ENCODE measurements at regions of chr11 and their contacts with region 1.

Region 1: DNA sequence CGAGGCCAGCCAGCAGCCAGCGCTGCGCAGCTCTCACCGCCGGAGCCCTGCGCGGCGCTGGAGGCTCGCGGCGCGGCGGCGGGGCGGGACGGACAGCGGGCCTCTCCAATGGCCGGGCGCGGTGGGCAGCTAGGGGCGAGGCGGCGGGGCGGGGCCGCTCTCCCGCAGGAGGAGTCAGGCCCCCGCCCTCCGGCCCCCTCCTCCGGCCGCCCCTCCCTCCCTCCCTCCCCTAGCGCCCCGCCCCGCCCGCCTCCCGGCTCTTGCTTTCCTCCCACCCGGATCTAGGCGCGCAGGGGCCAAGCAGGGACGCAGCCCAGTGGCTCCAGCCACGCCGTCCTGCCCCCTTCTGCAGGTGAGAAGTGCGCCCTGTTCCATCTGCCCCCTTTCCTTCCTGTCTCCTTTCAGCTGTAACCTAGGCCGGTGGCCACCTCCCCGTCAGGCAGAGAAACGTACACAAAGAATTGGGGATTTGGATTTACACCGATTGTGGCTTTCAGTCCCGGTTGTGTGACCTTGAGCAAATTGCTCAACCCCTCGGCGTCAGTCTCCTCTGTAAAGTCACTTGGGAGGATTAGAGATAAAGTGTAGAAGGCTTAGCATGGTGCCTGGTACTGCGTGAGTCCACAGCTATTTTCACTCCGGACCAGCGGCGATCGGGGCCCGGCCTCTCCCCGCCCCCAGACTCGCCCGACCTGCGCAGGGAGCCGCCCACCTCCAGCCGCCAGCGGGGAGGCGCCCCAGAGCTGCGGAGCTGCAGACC is at the start of gene FZD4:
- DNase-seq: peak; percentile 91
- ATAC-seq: peak; percentile 94
- H3K4me3 Mint-ChIP-seq: peak within 1 kb of the TSS; percentile 98
- H3K27ac Mint-ChIP-seq: peak within 1 kb of the TSS; percentile 96
- H3K4me1 Mint-ChIP-seq: peaks cover 47% of the 10 kb centered on the region
- H3K27me3 Mint-ChIP-seq: peaks cover 29% of the 10 kb centered on the region
- CTCF ChIP-seq: no peak
- total RNA-seq, gene FZD4: 7.7 to 9.8 TPM (median 9.2 TPM) in 3 replicates

Region 2: GRCh38 chr11:86848861-86849260 is 106.7 kb before region 1 on chr11:
- CTCF ChIA-PET with region 1: no interaction called
- POLR2A ChIA-PET with region 1: no interaction called
- DNase-seq: no peak
- ATAC-seq: no peak
- H3K4me3 Mint-ChIP-seq: no peak overlapping the region
- H3K27ac Mint-ChIP-seq: no peak overlapping the region
- H3K4me1 Mint-ChIP-seq: peaks cover 8% of the 10 kb centered on the region
- H3K27me3 Mint-ChIP-seq: no peaks in the 10 kb centered on the region
- CTCF ChIP-seq: no peak

Region 3: GRCh38 chr11:86938900-86939880 is 16.4 kb before region 1 on chr11:
- CTCF ChIA-PET with region 1: interaction called, 34 read pairs
- POLR2A ChIA-PET with region 1: interaction called, 4 read pairs
- DNase-seq: no peak
- ATAC-seq: peak; percentile 49
- H3K4me3 Mint-ChIP-seq: no peak overlapping the region
- H3K27ac Mint-ChIP-seq: peak overlapping the region; percentile 86; the same call in 1 of the 2 replicates
- H3K4me1 Mint-ChIP-seq: peaks cover 40% of the 10 kb centered on the region
- H3K27me3 Mint-ChIP-seq: no peaks in the 10 kb centered on the region
- CTCF ChIP-seq: peak; percentile 55

Region 4: DNA sequence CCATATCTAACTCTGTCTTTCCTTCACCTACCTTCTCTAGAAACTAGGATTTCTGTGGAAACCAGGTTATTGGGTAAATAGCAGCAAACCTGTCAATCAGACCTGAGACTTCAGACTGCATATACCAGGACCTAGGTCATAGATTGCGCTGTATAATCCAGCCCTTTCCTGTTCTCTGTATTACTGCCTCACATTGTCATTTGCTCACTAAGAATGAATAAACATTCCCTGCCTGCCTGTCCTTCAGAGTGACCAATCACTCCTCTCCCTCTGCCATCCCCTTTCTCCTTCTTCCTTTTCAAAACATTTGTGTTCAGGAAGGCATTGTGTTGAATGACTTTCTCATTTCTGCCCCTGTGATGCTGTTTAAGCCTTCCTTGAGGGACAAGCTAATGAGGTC is 13.7 kb after region 1 on chr11:
- CTCF ChIA-PET with region 1: interaction called, 11 read pairs
- POLR2A ChIA-PET with region 1: interaction called, 4 read pairs
- DNase-seq: no peak
- ATAC-seq: no peak
- H3K4me3 Mint-ChIP-seq: no peak overlapping the region
- H3K27ac Mint-ChIP-seq: no peak overlapping the region; the same call in 1 of the 2 replicates
- H3K4me1 Mint-ChIP-seq: peaks cover 15% of the 10 kb centered on the region
- H3K27me3 Mint-ChIP-seq: peaks cover 6% of the 10 kb centered on the region
- CTCF ChIP-seq: no peak

Region 5: DNA sequence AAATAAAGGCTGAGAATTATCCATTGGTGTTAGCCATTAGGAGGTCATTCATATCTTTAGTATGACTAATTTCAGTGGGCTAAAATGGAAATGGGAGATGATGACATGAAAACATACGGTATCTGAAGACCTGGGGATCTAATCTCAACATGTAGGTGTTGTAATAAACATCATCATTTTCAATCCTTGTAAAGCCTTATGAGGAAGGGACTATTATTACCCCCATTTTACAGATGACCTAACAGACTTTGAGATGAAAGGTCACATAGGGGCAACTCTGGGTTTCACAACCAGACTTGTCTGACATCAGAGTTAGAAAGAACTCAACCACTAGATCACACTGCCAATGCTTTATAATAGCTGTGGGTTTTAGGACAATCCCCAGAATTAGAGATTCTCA is 47.4 kb after region 1 on chr11:
- CTCF ChIA-PET with region 1: no interaction called
- POLR2A ChIA-PET with region 1: no interaction called
- DNase-seq: no peak
- ATAC-seq: no peak
- H3K4me3 Mint-ChIP-seq: no peak overlapping the region
- H3K27ac Mint-ChIP-seq: no peak overlapping the region
- H3K4me1 Mint-ChIP-seq: peaks cover 17% of the 10 kb centered on the region
- H3K27me3 Mint-ChIP-seq: no peaks in the 10 kb centered on the region
- CTCF ChIP-seq: no peak

Region 6: GRCh38 chr11:87037450-87038234 is 82.1 kb after region 1 on chr11 and contains the start of gene TMEM135:
- CTCF ChIA-PET with region 1: interaction called, 20 read pairs
- POLR2A ChIA-PET with region 1: interaction called, 14 read pairs
- DNase-seq: peak; percentile 98
- ATAC-seq: peak; percentile 97
- H3K4me3 Mint-ChIP-seq: peak within 1 kb of the TSS; percentile 95
- H3K27ac Mint-ChIP-seq: peak within 1 kb of the TSS; percentile 92
- H3K4me1 Mint-ChIP-seq: peaks cover 60% of the 10 kb centered on the region
- H3K27me3 Mint-ChIP-seq: no peaks in the 10 kb centered on the region
- CTCF ChIP-seq: no peak
- total RNA-seq, gene TMEM135: 28.4 to 35.8 TPM (median 30.9 TPM) in 3 replicates

Region 7: GRCh38 chr11:87097582-87097981 is 142.0 kb after region 1 on chr11:
- CTCF ChIA-PET with region 1: interaction called, 16 read pairs
- POLR2A ChIA-PET with region 1: no interaction called
- DNase-seq: peak; percentile 68
- ATAC-seq: peak; percentile 99
- H3K4me3 Mint-ChIP-seq: no peak overlapping the region
- H3K27ac Mint-ChIP-seq: no peak overlapping the region
- H3K4me1 Mint-ChIP-seq: no peaks in the 10 kb centered on the region
- H3K27me3 Mint-ChIP-seq: no peaks in the 10 kb centered on the region
- CTCF ChIP-seq: peak; percentile 64